ENCODE measurements at regions of chr2 and their contacts with region 1.

Region 1: GRCh38 chr2:218898109-218898878 is 17.6 kb downstream of the WNT10A start:
- DNase-seq: peak; percentile 18
- ATAC-seq: peak; percentile 86
- H3K4me3 ChIP-seq: no peak overlapping the region
- H3K27ac ChIP-seq: no peak overlapping the region
- H3K4me1 ChIP-seq: peaks cover 3% of the 10 kb centered on the region; the same call in 1 of the 2 replicates
- H3K27me3 ChIP-seq: peaks cover 77% of the 10 kb centered on the region
- CTCF ChIP-seq: peak; percentile 79
- POLR2A ChIP-seq: no peak
- RAD21 ChIP-seq: peak; percentile 66

Region 2: DNA sequence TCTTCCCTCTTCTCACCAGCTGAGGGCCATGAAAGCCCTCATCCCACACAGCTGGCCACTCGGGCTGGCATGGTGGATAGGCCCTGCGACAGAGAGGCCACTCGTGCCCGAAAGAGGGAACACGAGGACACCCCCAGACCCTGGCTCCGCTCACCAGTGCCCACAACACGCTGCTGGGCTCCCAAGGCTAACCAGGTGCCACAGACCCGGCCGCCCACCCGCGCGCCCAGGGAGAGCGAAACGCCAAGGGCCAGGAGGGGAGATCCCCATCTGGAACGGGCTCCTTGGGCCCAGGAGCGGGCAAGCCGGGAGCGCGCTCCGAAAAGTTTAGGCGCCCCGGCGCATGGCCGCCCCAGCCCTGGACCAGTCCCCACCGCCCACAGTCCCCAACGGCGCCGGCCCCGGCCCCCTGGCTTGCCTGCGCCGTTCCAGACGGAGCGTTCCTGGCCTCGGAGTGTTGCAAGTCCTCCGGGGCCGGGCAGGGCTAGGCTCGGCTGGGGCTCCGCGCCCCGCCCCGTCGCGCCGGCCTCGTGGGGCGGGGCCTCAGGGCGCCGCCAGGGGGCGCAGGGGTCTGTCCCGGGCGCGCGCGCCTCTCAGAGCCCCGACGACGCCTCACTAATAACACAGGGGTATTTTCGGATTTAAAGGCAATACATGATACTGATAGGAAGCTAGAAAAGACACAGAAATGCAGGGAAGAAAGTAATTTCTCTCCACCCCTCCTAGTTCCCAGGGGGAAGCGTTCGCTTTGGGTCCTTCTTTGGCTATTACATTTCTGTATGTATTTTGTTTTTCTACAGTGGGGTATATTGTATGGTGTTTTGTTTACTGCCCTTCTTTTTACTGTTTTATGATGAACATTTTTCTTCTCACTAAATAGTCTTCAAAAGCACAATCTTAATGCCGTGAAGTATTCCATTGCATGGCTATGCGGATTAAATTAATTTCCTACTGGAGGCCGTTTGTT is 606.0 kb before region 1 on chr2 and contains the start of gene TMBIM1:
- CTCF ChIA-PET with region 1: no interaction called
- POLR2A ChIA-PET with region 1: no interaction called
- dilution Hi-C with region 1: no loop called
- in situ Hi-C with region 1: no loop called
- intact Hi-C with region 1: no loop called
- DNase-seq: peak; percentile 58
- ATAC-seq: peak; percentile 93
- H3K4me3 ChIP-seq: peak within 1 kb of the TSS; percentile 86
- H3K27ac ChIP-seq: peak within 1 kb of the TSS; percentile 92
- H3K4me1 ChIP-seq: peaks cover 20% of the 10 kb centered on the region
- H3K27me3 ChIP-seq: no peaks in the 10 kb centered on the region
- CTCF ChIP-seq: peak; percentile 93
- POLR2A ChIP-seq: peak; percentile 42; the same call in 1 of the 2 replicates
- RAD21 ChIP-seq: peak; percentile 60
- total RNA-seq, gene TMBIM1: 78.6 and 102 TPM in 2 replicates

Region 3: DNA sequence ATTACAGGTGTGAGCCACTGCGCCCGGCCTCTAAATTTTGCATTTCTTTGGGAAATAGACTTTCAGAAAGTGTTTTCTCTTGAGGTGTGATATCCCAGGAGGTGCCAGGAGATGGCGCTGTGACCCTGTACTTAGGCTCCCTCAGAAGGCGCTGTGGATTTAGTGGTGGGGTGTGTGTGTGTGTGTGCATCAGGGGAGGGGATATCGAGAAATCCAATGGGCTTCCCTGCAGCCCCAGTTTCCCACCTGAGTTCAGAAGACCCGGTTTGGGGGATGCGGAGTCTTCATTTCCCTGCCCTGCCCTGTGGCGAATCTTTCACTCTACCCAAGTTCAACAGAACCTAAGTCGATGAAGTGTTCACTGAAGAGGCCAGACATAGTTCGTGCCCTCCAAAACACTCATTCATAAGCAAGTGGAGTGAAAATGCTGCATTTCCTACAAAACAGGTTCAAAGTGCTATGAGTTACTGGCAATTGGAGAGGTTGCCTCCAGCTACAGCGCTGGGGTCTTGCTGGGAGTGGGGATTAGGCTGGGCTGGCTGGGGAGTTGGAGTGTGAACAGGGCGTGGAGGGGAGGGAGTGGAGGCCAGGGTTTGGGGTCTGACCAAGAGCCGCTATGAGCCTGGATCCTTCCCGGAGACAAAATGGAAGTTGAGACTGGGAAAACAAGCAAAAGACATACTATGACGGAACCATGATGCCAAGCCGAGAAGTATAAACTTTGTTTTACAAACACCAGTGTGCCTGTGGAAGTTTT is 45.2 kb before region 1 on chr2:
- CTCF ChIA-PET with region 1: interaction called, 3 read pairs
- POLR2A ChIA-PET with region 1: no interaction called
- dilution Hi-C with region 1: no loop called
- in situ Hi-C with region 1: no loop called
- intact Hi-C with region 1: loop called (anchors 2 kb)
- DNase-seq: peak; percentile 52
- ATAC-seq: peak; percentile 78
- H3K4me3 ChIP-seq: no peak overlapping the region
- H3K27ac ChIP-seq: no peak overlapping the region
- H3K4me1 ChIP-seq: no peaks in the 10 kb centered on the region
- H3K27me3 ChIP-seq: peaks cover 57% of the 10 kb centered on the region
- CTCF ChIP-seq: peak; percentile 72
- POLR2A ChIP-seq: no peak
- RAD21 ChIP-seq: peak; percentile 75

Region 4: DNA sequence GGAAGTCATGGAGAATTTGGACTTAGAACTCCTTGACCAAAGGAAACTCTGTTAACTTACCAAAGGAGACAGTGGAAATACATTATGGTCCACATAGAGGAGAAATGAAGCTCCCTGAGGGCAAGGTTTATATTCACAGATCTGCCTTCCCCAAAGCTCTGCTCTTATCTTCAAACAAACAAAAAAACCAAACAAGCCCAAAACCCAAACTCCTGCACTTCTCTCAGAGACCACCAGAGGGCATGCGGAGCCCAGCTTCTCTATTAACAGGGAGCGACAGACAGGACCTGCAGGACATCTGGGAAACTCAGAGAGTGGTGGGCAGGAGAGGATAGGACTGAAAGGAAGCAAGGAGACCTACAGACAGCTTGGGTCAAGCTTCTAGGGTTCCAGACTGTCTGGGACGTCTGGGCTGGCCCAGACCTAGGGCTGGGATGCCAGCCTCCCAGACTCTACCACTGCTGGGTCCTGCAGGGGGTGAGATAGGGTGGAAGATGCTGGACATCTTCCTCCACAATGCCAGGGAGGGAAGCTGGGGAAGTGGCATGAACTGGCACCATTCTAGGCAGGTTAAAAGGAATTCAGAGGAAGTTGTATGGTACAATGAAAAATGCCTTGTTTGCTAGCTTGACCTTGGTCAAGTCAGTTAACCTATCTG is 21.6 kb before region 1 on chr2:
- CTCF ChIA-PET with region 1: interaction called, 49 read pairs
- POLR2A ChIA-PET with region 1: no interaction called
- dilution Hi-C with region 1: no loop called
- in situ Hi-C with region 1: no loop called
- intact Hi-C with region 1: loop called (anchors 1 kb)
- DNase-seq: peak; percentile 56
- ATAC-seq: peak; percentile 84
- H3K4me3 ChIP-seq: no peak overlapping the region
- H3K27ac ChIP-seq: no peak overlapping the region
- H3K4me1 ChIP-seq: no peaks in the 10 kb centered on the region
- H3K27me3 ChIP-seq: peaks cover 92% of the 10 kb centered on the region
- CTCF ChIP-seq: peak; percentile 87
- POLR2A ChIP-seq: no peak
- RAD21 ChIP-seq: peak; percentile 81

Region 5: GRCh38 chr2:218885981-218886947 is 12.0 kb before region 1 on chr2:
- CTCF ChIA-PET with region 1: interaction called, 22 read pairs
- POLR2A ChIA-PET with region 1: no interaction called
- dilution Hi-C with region 1: no loop called
- in situ Hi-C with region 1: no loop called
- intact Hi-C with region 1: no loop called
- DNase-seq: no peak
- ATAC-seq: no peak
- H3K4me3 ChIP-seq: no peak overlapping the region
- H3K27ac ChIP-seq: no peak overlapping the region
- H3K4me1 ChIP-seq: no peaks in the 10 kb centered on the region
- H3K27me3 ChIP-seq: peaks cover 74% of the 10 kb centered on the region
- CTCF ChIP-seq: no peak
- POLR2A ChIP-seq: no peak
- RAD21 ChIP-seq: no peak

Region 6: DNA sequence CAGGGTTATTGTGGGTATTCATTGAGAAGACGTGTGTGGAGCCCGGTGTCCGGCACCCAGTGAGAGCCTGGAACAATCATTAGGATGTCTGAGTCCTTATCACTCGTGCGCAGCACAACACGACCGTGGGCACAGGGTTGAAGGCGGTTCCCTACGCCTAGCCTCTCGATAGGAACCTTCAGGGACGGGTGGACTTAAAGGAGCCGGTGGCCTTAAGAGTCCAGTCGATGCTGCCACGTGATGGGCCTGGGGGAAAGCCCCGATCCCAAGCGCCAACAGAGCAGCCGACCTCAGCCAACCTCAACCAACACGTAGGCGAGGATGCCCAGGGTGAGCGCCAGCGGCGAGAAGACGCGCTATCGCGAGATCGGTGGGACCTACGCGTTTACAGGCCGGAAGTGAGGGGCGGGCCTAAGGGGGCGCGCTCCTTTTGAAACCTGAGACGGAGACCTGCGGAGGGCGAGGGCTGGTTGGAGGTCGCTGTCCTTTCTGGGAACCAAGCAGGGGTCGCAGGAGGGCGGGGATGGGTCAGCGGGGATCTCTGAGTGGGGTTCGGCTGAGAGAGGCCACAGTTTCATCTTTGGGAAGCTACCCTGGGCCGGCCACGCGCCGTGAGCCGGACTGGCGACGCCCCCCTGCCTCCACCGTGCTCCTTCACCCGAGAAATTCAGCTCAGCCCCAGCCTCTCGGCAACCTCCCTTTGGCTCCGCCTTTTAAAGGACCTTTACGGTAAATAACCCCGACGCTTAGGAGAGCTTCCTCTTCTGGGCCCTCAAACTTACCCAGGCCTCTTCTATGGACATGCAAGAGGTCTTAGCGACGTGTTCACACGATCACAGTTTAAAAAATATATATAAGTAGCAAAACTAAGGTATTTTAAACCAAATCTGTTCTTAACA is 10.7 kb after region 1 on chr2:
- CTCF ChIA-PET with region 1: interaction called, 12 read pairs
- POLR2A ChIA-PET with region 1: no interaction called
- dilution Hi-C with region 1: no loop called
- in situ Hi-C with region 1: no loop called
- intact Hi-C with region 1: no loop called
- DNase-seq: peak; percentile 71
- ATAC-seq: peak; percentile 98
- H3K4me3 ChIP-seq: peak overlapping the region; percentile 56
- H3K27ac ChIP-seq: no peak overlapping the region
- H3K4me1 ChIP-seq: no peaks in the 10 kb centered on the region
- H3K27me3 ChIP-seq: peaks cover 31% of the 10 kb centered on the region
- CTCF ChIP-seq: no peak
- POLR2A ChIP-seq: no peak
- RAD21 ChIP-seq: no peak